ENCODE measurements at regions of chr1 and their contacts with region 1.

Region 1: GRCh38 chr1:5125208-5125607 is 470.8 kb downstream of the AJAP1 start:
- DNase-seq: no peak
- ATAC-seq: no peak
- H3K4me3 ChIP-seq: no peak overlapping the region
- H3K4me3 Mint-ChIP-seq: no peak overlapping the region
- H3K27ac ChIP-seq: no peak overlapping the region
- H3K27ac Mint-ChIP-seq: no peak overlapping the region
- H3K4me1 ChIP-seq: no peaks in the 10 kb centered on the region
- H3K4me1 Mint-ChIP-seq: peaks cover 0 to 9% (median 0%) of the 10 kb centered on the region in 3 donors
- H3K27me3 ChIP-seq: peaks cover 0 to 4% of the 10 kb centered on the region in 2 experiments
- H3K27me3 Mint-ChIP-seq: peaks cover 4 to 21% of the 10 kb centered on the region in 2 donors

Region 2: DNA sequence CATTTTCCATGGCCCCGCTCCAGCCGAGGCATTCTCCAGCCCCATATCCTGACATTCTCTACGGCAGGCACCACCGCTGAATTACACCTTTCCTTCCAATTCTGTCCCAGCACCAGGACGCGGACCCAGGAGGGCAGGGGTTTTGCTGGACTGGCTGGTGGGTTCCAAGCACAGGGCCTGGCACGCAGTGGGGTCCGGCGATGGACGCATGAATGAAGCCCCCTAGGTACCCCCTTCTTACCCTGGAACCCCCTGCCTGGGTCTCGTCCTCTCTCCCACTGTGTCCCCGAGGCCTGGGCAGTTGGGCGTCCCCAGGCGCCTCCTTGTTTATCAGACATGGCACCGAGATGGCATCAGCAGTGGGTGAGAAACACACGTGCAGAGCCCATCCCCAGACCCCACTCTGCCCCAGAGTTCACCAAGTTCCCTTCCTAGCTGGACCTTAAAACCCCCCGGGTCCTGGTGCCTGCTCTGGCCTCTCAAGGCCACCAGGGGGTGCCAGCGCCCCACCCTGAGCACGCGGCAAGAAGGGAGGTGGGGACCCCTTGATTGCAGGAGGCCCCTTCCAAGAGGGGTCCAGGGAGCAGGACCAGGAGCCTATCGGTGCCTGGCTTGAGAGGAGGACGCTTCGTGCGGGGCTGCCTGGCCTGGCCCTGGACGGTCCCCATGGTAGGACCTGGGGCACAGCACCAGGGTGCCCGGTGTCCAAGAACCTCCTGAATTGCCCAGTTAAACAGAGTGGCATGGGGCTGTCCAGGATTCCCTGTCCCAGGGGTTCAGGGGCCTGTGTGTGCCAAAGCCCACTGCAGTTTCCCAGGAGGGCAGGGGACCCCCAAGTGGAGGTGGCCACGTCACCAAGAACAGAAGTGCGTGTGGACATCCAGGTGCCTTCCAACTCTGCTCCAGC is 1560.0 kb before region 1 on chr1:
- CTCF ChIA-PET with region 1: no interaction called
- POLR2A ChIA-PET with region 1: no interaction called
- DNase-seq: peak in 27 of 35 experiments; percentile 4 to 67 (median 27)
- ATAC-seq: peak; percentile 41 to 69 (median 58)
- H3K4me3 ChIP-seq: no peak overlapping the region
- H3K4me3 Mint-ChIP-seq: no peak overlapping the region
- H3K27ac ChIP-seq: no peak overlapping the region
- H3K27ac Mint-ChIP-seq: peak overlapping the region in 1 of 2 donors; percentile 16
- H3K4me1 ChIP-seq: no peaks in the 10 kb centered on the region
- H3K4me1 Mint-ChIP-seq: no peaks in the 10 kb centered on the region
- H3K27me3 ChIP-seq: peaks cover 0 to 27% of the 10 kb centered on the region in 2 experiments
- H3K27me3 Mint-ChIP-seq: peaks cover 0 to 3% of the 10 kb centered on the region in 2 donors

Region 3: GRCh38 chr1:5084676-5085075 is 40.5 kb before region 1 on chr1:
- CTCF ChIA-PET with region 1: no interaction called
- POLR2A ChIA-PET with region 1: interaction called in 1 of 2 experiments, 10 read pairs
- DNase-seq: no peak
- ATAC-seq: no peak
- H3K4me3 ChIP-seq: no peak overlapping the region
- H3K4me3 Mint-ChIP-seq: no peak overlapping the region
- H3K27ac ChIP-seq: no peak overlapping the region
- H3K27ac Mint-ChIP-seq: no peak overlapping the region
- H3K4me1 ChIP-seq: no peaks in the 10 kb centered on the region
- H3K4me1 Mint-ChIP-seq: no peaks in the 10 kb centered on the region
- H3K27me3 ChIP-seq: peaks cover 0 to 3% of the 10 kb centered on the region in 2 experiments
- H3K27me3 Mint-ChIP-seq: peaks cover 7 to 19% of the 10 kb centered on the region in 2 donors

Measured in T-cell (primary cell).